CD8-positive, alpha-beta memory T cell (primary cell): ENCODE measurements at regions of chr1 and their contacts with region 1.

Region 1: DNA sequence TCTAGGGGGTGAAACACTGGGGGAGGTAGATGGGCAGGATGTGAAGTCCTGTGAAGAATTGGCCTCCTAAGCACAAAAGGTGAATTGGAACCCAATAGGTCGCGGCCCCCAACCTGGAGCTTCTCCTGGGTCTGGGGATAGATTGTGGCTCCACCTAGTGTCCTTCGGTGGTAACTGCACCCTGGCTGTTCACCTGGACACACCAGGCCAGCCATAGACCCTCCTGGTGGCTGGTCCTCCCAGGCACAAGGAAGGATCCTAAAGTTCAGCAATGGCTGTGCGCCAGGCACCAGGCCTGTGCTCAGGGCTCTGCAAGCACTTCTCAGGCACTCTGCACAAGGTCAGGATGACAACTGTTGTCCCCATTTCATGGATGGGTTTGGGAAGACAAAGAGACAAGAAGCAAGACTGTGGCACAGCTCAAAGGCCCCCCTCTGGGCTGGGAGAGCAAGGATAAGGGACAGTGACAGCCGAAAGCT is 13.5 kb downstream of the ESPN start:
- DNase-seq: peak; percentile 55 to 78 (median 69)
- H3K4me3 ChIP-seq: no peak overlapping the region
- H3K4me3 Mint-ChIP-seq: peak overlapping the region in 3 of 7 donors; percentile 37 to 45 (median 41)
- H3K27ac ChIP-seq: no peak overlapping the region
- H3K27ac Mint-ChIP-seq: no peak overlapping the region
- H3K4me1 ChIP-seq: no peaks in the 10 kb centered on the region
- H3K4me1 Mint-ChIP-seq: peaks cover 10% of the 10 kb centered on the region in 3 donors
- H3K27me3 ChIP-seq: peaks cover 5% of the 10 kb centered on the region
- H3K27me3 Mint-ChIP-seq: peaks cover 22 to 32% of the 10 kb centered on the region in 2 donors

Region 2: GRCh38 chr1:6343506-6344405 is 94.3 kb before region 1 on chr1:
- CTCF ChIA-PET with region 1: interaction called, 20 read pairs
- POLR2A ChIA-PET with region 1: no interaction called
- DNase-seq: peak; percentile 39 to 65 (median 44)
- H3K4me3 ChIP-seq: no peak overlapping the region
- H3K4me3 Mint-ChIP-seq: no peak overlapping the region
- H3K27ac ChIP-seq: no peak overlapping the region
- H3K27ac Mint-ChIP-seq: peak overlapping the region in 3 of 8 donors; percentile 3 to 66 (median 54)
- H3K4me1 ChIP-seq: peaks cover 13% of the 10 kb centered on the region
- H3K4me1 Mint-ChIP-seq: peaks cover 11 to 12% (median 12%) of the 10 kb centered on the region in 3 donors
- H3K27me3 ChIP-seq: no peaks in the 10 kb centered on the region
- H3K27me3 Mint-ChIP-seq: no peaks in the 10 kb centered on the region

Region 3: GRCh38 chr1:6448749-6449631 is 10.9 kb after region 1 on chr1:
- CTCF ChIA-PET with region 1: interaction called, 21 read pairs
- POLR2A ChIA-PET with region 1: no interaction called
- DNase-seq: no peak
- H3K4me3 ChIP-seq: no peak overlapping the region
- H3K4me3 Mint-ChIP-seq: peak overlapping the region; percentile 30 to 86 (median 59)
- H3K27ac ChIP-seq: no peak overlapping the region
- H3K27ac Mint-ChIP-seq: peak overlapping the region in 6 of 8 donors; percentile 3 to 77 (median 18)
- H3K4me1 ChIP-seq: peaks cover 13% of the 10 kb centered on the region
- H3K4me1 Mint-ChIP-seq: peaks cover 6 to 38% (median 18%) of the 10 kb centered on the region in 3 donors
- H3K27me3 ChIP-seq: peaks cover 29% of the 10 kb centered on the region
- H3K27me3 Mint-ChIP-seq: peaks cover 45 to 61% of the 10 kb centered on the region in 2 donors

Region 4: DNA sequence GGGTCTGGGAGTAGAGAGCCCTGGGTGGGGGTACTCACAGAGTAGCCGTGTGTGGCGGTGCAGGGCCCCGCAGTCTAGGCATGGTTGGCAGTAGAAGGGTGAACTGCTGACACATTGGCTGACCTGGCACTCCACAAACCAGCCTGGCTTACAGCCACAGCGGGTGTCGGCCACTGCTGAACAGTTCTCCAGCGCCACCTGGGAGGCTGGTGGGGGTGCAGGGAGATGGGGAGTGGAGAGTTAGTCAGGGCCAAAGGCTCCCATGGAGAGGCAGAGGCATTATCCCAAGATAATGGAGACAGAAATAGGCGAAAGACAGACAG is 26.4 kb after region 1 on chr1:
- CTCF ChIA-PET with region 1: interaction called, 15 read pairs
- POLR2A ChIA-PET with region 1: no interaction called
- DNase-seq: no peak
- H3K4me3 ChIP-seq: peak overlapping the region; percentile 81
- H3K4me3 Mint-ChIP-seq: peak overlapping the region; percentile 88 to 98 (median 91)
- H3K27ac ChIP-seq: no peak overlapping the region
- H3K27ac Mint-ChIP-seq: peak overlapping the region; percentile 81 to 98 (median 94)
- H3K4me1 ChIP-seq: peaks cover 57% of the 10 kb centered on the region
- H3K4me1 Mint-ChIP-seq: peaks cover 35 to 61% (median 42%) of the 10 kb centered on the region in 3 donors
- H3K27me3 ChIP-seq: no peaks in the 10 kb centered on the region
- H3K27me3 Mint-ChIP-seq: no peaks in the 10 kb centered on the region